ENCODE measurements at regions of chr15 and their contacts with region 1.

Region 1: GRCh38 chr15:59492389-59493377 is 54.7 kb downstream of the FAM81A start:
- DNase-seq: peak; percentile 31 to 69 (median 40)
- ATAC-seq: peak; percentile 94
- H3K4me3 ChIP-seq: no peak overlapping the region
- H3K27ac ChIP-seq: no peak overlapping the region
- H3K4me1 ChIP-seq: no peaks in the 10 kb centered on the region; a peak in 1 of 5 replicates
- H3K27me3 ChIP-seq: peaks cover 7 to 20% of the 10 kb centered on the region in 2 experiments; a peak in 3 of 5 replicates
- CTCF ChIP-seq: peak; percentile 70 to 85 (median 84)
- EP300 ChIP-seq: no peak
- POLR2A ChIP-seq: no peak
- RAD21 ChIP-seq: peak; percentile 88 to 93

Region 2: GRCh38 chr15:58212909-58213526 is 1279.7 kb before region 1 on chr15:
- CTCF ChIA-PET with region 1: no interaction called
- POLR2A ChIA-PET with region 1: no interaction called
- in situ Hi-C with region 1: loop called (anchors 25 kb)
- intact Hi-C with region 1: no loop called
- DNase-seq: peak in 3 of 4 experiments; percentile 31 to 64 (median 46)
- ATAC-seq: peak; percentile 92
- H3K4me3 ChIP-seq: no peak overlapping the region
- H3K27ac ChIP-seq: no peak overlapping the region
- H3K4me1 ChIP-seq: peaks cover 0 to 2% of the 10 kb centered on the region in 2 experiments; a peak in 2 of 5 replicates
- H3K27me3 ChIP-seq: no peaks in the 10 kb centered on the region
- CTCF ChIP-seq: peak; percentile 60 to 76 (median 67)
- EP300 ChIP-seq: no peak
- POLR2A ChIP-seq: no peak
- RAD21 ChIP-seq: peak; percentile 31 to 69

Region 3: DNA sequence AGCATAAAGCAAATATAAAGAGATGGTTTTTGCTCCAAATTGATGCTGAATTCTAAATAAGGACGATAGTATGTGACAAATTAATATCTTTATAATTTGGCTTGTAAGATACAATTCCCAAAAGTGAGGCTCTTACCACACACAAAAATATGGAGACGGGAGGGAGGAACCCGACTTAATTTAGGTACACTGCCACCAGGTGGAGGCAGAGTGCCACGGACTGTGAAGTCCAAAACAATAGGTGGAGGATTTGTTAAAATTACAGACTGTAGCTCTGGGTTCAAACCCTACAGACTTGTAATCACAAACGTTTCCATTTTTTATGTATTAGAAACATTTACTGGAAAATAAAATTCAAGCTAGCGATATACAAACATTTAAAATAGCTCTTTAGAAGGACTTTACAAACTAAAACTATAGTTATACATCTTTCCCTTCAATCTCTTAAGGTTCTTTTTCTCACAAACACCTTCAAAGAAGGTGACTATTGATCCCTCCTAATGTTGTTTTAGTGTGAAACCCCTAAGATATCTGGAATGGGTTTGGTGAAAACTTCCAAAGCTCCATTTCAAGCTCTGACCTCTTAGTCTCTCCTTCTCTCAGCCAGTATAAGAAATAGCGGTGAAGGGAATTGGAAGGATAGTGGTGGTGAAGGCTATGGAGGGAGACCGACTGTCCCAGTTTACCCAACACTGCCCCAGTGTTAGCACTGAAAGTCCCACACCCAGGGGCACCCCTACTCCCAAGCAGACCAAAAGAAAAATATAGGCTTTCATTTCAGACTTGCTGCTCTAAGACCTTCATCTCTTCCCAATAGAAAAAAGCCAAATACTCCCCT is 1264.8 kb before region 1 on chr15:
- CTCF ChIA-PET with region 1: interaction called, 3 read pairs
- POLR2A ChIA-PET with region 1: no interaction called
- in situ Hi-C with region 1: loop called (anchors 25 kb)
- intact Hi-C with region 1: loop called (anchors 10 kb)
- DNase-seq: peak; percentile 66 to 89 (median 74)
- ATAC-seq: peak; percentile 89
- H3K4me3 ChIP-seq: no peak overlapping the region
- H3K27ac ChIP-seq: no peak overlapping the region
- H3K4me1 ChIP-seq: peaks cover 0 to 5% of the 10 kb centered on the region in 2 experiments; a peak in 3 of 5 replicates
- H3K27me3 ChIP-seq: no peaks in the 10 kb centered on the region
- CTCF ChIP-seq: peak; percentile 80 to 92 (median 83)
- EP300 ChIP-seq: no peak
- POLR2A ChIP-seq: no peak
- RAD21 ChIP-seq: peak; percentile 96 to 98

Region 4: DNA sequence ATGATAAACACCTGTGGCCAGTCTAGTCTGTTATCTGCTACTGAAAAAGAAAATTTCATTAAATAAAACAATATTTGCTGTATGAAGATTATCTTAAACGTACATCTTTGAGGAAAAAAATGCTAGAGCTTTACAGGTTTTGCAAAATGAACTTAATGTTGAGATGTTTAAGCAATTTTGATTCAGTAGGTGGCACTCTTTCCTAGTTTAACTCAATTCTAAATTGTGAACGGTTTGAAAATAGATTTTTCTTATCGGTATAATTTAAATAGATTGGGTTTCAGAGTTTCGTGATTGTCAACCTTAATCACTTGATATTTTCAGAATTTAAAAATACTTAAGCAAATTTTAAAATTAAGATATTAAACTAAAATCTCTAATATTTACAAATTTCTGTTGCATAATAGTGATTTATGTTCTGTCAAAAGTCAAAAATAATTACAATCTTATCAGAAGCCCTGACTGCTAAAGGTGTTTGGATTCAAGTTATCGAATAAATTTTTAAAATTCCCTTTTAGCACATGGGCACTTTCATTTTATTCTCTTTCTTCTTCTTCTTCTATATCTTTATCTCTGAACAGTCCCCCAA is 512.2 kb before region 1 on chr15:
- CTCF ChIA-PET with region 1: interaction called, 5 read pairs
- POLR2A ChIA-PET with region 1: no interaction called
- in situ Hi-C with region 1: loop called (anchors 10 kb)
- intact Hi-C with region 1: loop called (anchors 2 kb)
- DNase-seq: peak in 2 of 4 experiments; percentile 20 to 40
- ATAC-seq: peak; percentile 57; the same call in 2 of the 3 replicates
- H3K4me3 ChIP-seq: no peak overlapping the region
- H3K27ac ChIP-seq: no peak overlapping the region
- H3K4me1 ChIP-seq: no peaks in the 10 kb centered on the region
- H3K27me3 ChIP-seq: no peaks in the 10 kb centered on the region
- CTCF ChIP-seq: peak in 2 of 3 experiments; percentile 25 to 74; a peak in 4 of 6 replicates
- EP300 ChIP-seq: no peak
- POLR2A ChIP-seq: no peak
- RAD21 ChIP-seq: peak; percentile 75 to 82

Region 5: GRCh38 chr15:59150185-59150584 is 342.5 kb before region 1 on chr15:
- CTCF ChIA-PET with region 1: interaction called, 3 read pairs
- POLR2A ChIA-PET with region 1: interaction called, 3 read pairs
- in situ Hi-C with region 1: loop called (anchors 5 kb)
- intact Hi-C with region 1: no loop called
- DNase-seq: no peak
- ATAC-seq: no peak
- H3K4me3 ChIP-seq: no peak overlapping the region
- H3K27ac ChIP-seq: no peak overlapping the region
- H3K4me1 ChIP-seq: no peaks in the 10 kb centered on the region
- H3K27me3 ChIP-seq: peaks cover 27 to 28% of the 10 kb centered on the region in 2 experiments
- CTCF ChIP-seq: no peak
- EP300 ChIP-seq: no peak
- POLR2A ChIP-seq: no peak
- RAD21 ChIP-seq: no peak

Region 6: GRCh38 chr15:59160880-59161593 is 331.6 kb before region 1 on chr15:
- CTCF ChIA-PET with region 1: interaction called, 22 read pairs
- POLR2A ChIA-PET with region 1: no interaction called
- in situ Hi-C with region 1: no loop called
- intact Hi-C with region 1: loop called (anchors 2 kb)
- DNase-seq: peak; percentile 46 to 63 (median 56)
- ATAC-seq: peak; percentile 97
- H3K4me3 ChIP-seq: no peak overlapping the region
- H3K27ac ChIP-seq: no peak overlapping the region
- H3K4me1 ChIP-seq: peaks cover 0 to 4% of the 10 kb centered on the region in 2 experiments; a peak in 1 of 5 replicates
- H3K27me3 ChIP-seq: peaks cover 10 to 46% of the 10 kb centered on the region in 2 experiments; a peak in 4 of 5 replicates
- CTCF ChIP-seq: peak; percentile 82 to 90 (median 89)
- EP300 ChIP-seq: no peak
- POLR2A ChIP-seq: no peak
- RAD21 ChIP-seq: peak; percentile 68 to 88

Region 7: DNA sequence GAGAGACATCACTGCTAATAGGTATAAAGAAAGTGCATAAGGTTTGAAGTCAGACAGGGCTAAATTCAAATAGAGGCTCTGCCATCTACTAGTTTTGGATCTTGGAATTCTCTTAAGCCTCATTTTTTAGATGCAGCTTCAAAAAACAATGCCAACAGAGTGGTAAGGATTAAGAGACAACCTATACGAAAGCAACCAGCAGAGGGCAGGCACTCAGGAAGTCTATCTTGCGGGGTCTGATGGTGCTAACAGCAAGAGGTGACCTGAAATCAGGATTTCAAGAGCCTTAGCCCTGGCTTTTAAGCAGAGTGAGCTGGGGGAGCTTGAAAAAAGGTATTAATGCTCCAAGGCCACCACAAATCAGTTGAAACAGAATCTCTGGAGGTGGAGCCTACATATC is 245.3 kb before region 1 on chr15:
- CTCF ChIA-PET with region 1: interaction called, 3 read pairs
- POLR2A ChIA-PET with region 1: no interaction called
- in situ Hi-C with region 1: no loop called
- intact Hi-C with region 1: loop called (anchors 5 kb)
- DNase-seq: peak in 3 of 4 experiments; percentile 13 to 27 (median 22)
- ATAC-seq: peak; percentile 78
- H3K4me3 ChIP-seq: no peak overlapping the region
- H3K27ac ChIP-seq: no peak overlapping the region
- H3K4me1 ChIP-seq: no peaks in the 10 kb centered on the region
- H3K27me3 ChIP-seq: peaks cover 12 to 17% of the 10 kb centered on the region in 2 experiments; a peak in 3 of 5 replicates
- CTCF ChIP-seq: peak; percentile 23 to 46 (median 41); a peak in 5 of 6 replicates
- EP300 ChIP-seq: no peak
- POLR2A ChIP-seq: no peak
- RAD21 ChIP-seq: peak in 1 of 2 experiments; percentile 45; a peak in 2 of 4 replicates